ENCODE measurements at regions of chr10 and their contacts with region 1.

Region 1: GRCh38 chr10:11611248-11612020 is at the start of gene USP6NL:
- DNase-seq: peak; percentile 89 to 93
- ATAC-seq: peak; percentile 94 to 98 (median 97)
- H3K4me3 ChIP-seq: peak within 1 kb of the TSS; percentile 72 to 96 (median 84)
- H3K27ac ChIP-seq: peak within 1 kb of the TSS; percentile 73 to 94 (median 92)
- H3K4me1 ChIP-seq: peaks cover 4 to 27% (median 19%) of the 10 kb centered on the region in 9 donors
- H3K27me3 ChIP-seq: no peaks in the 10 kb centered on the region
- CTCF ChIP-seq: no peak
- total RNA-seq, gene USP6NL: 5.7 to 11.1 (median 8.9) TPM

Region 2: GRCh38 chr10:11515596-11516430 is 95.6 kb before region 1 on chr10:
- intact Hi-C with region 1: loop called in 4 of 10 experiments (anchors 5 to 10 kb)
- DNase-seq: peak in 1 of 2 donors; percentile 44
- ATAC-seq: peak; percentile 53 to 92 (median 84)
- H3K4me3 ChIP-seq: no peak overlapping the region
- H3K27ac ChIP-seq: no peak overlapping the region
- H3K4me1 ChIP-seq: peaks cover 0 to 17% (median 8%) of the 10 kb centered on the region in 9 donors
- H3K27me3 ChIP-seq: no peaks in the 10 kb centered on the region
- CTCF ChIP-seq: peak; percentile 68 to 93 (median 90)

Region 3: DNA sequence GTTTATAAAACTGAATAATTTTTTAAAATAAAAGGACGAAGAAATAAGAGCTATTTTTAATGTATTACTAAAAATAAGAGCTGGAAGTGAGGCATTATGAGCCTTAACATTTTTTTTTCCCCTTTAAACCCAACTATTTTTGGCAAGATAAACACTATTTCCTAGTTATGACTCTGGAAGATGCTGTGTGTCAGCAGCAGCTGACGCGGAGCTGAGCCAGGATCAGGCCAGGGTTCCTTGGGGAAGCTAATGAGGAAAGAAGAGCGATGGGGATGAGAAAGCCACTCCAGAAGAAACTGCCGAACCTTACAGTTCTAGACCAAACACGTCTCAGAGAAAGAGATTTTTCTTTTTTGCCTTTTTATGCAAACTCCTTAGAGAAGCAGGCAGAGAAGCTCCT is 85.9 kb before region 1 on chr10:
- intact Hi-C with region 1: loop called in 5 of 10 experiments (anchors 2 to 10 kb)
- DNase-seq: peak; percentile 57 to 66
- ATAC-seq: peak in 7 of 8 donors; percentile 73 to 88 (median 77)
- H3K4me3 ChIP-seq: no peak overlapping the region
- H3K27ac ChIP-seq: peak overlapping the region in 7 of 10 donors; percentile 26 to 62 (median 45)
- H3K4me1 ChIP-seq: peaks cover 0 to 71% (median 37%) of the 10 kb centered on the region in 9 donors
- H3K27me3 ChIP-seq: no peaks in the 10 kb centered on the region
- CTCF ChIP-seq: no peak

Region 4: DNA sequence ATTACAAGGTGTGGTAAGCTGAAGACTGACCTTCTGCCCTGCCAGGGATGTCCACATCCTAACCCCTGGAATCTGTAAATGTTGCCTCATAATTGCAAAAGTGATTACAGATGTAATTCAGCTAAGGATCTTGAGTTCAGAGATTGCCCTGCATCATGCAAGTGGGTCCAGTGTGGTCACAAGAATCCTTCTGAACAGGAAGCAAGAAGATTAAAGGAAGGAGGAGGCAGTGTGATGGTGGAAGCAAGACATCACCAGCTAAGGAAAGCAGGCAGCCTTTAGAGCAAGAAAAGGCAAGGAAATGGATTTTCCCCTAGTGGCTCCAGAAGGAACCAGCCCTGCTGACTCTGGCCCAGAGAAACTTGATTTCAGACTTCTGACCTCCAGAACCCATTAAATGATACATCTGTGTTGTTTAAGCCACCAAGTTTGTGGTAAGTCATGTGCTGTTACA is 78.1 kb before region 1 on chr10:
- intact Hi-C with region 1: loop called in 4 of 10 experiments (anchors 5 to 10 kb)
- DNase-seq: no peak
- ATAC-seq: peak in 5 of 8 donors; percentile 37 to 58 (median 45)
- H3K4me3 ChIP-seq: peak overlapping the region in 1 of 10 donors; percentile 20
- H3K27ac ChIP-seq: peak overlapping the region in 6 of 10 donors; percentile 8 to 59 (median 31)
- H3K4me1 ChIP-seq: peaks cover 0 to 42% (median 9%) of the 10 kb centered on the region in 9 donors
- H3K27me3 ChIP-seq: no peaks in the 10 kb centered on the region
- CTCF ChIP-seq: peak in 4 of 9 donors; percentile 26 to 35 (median 30)

Region 5: GRCh38 chr10:11684717-11685645 is 73.5 kb after region 1 on chr10:
- intact Hi-C with region 1: loop called in 2 of 10 experiments (anchors 5 kb)
- DNase-seq: peak; percentile 65 to 66
- ATAC-seq: peak; percentile 55 to 84 (median 80)
- H3K4me3 ChIP-seq: peak overlapping the region in 9 of 10 donors; percentile 6 to 44 (median 34)
- H3K27ac ChIP-seq: peak overlapping the region in 9 of 10 donors; percentile 22 to 84 (median 68)
- H3K4me1 ChIP-seq: peaks cover 3 to 46% (median 26%) of the 10 kb centered on the region in 9 donors
- H3K27me3 ChIP-seq: peaks cover 0 to 20% (median 0%) of the 10 kb centered on the region in 7 donors
- CTCF ChIP-seq: no peak

Region 6: GRCh38 chr10:11724938-11725776 is 113.7 kb after region 1 on chr10:
- intact Hi-C with region 1: loop called in 1 of 10 experiments (anchors 10 kb)
- DNase-seq: peak in 1 of 2 donors; percentile 27
- ATAC-seq: peak; percentile 62 to 86 (median 79)
- H3K4me3 ChIP-seq: no peak overlapping the region
- H3K27ac ChIP-seq: no peak overlapping the region
- H3K4me1 ChIP-seq: peaks cover 0 to 6% (median 0%) of the 10 kb centered on the region in 9 donors
- H3K27me3 ChIP-seq: no peaks in the 10 kb centered on the region
- CTCF ChIP-seq: peak; percentile 48 to 83 (median 74)

Region 7: DNA sequence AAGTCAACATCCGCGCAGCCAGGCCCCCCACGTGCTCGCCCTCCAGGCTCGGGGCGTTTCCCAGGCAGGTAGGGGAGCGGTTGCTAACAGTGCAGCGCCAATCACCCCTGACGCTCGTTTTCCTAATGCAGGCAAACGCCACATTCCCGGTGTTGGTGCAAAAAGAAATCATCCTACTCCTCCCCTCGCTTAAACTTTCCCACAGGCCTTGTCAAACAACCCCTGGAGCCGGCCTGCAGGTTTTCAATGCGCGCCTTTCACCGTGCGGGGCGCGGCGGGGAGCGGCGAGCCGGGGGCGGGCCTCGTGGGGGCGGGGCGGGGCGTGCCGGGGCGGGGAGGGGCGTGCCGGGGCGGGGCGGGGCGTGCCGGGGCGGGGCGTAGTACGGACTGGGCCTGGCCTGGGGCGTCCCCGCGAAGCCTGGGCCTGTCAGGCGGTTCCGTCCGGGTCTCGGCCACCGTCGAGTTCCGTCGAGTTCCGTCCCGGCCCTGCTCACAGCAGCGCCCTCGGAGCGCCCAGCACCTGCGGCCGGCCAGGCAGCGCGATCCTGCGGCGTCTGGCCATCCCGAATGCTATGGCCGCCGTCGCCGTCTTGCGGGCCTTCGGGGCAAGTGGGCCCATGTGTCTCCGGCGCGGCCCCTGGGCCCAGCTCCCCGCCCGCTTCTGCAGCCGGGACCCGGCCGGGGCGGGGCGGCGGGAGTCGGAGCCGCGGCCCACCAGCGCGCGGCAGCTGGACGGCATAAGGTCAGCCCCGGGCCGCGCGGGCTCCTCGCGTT is 130.8 kb after region 1 on chr10 and contains the start of gene ECHDC3:
- intact Hi-C with region 1: loop called in 1 of 10 experiments (anchors 5 kb)
- DNase-seq: peak; percentile 61 to 75
- ATAC-seq: peak; percentile 66 to 91 (median 83)
- H3K4me3 ChIP-seq: peak within 1 kb of the TSS; percentile 36 to 69 (median 64)
- H3K27ac ChIP-seq: peak within 1 kb of the TSS; percentile 86 to 97 (median 94)
- H3K4me1 ChIP-seq: peaks cover 0 to 38% (median 18%) of the 10 kb centered on the region in 9 donors
- H3K27me3 ChIP-seq: peaks cover 0 to 9% (median 0%) of the 10 kb centered on the region in 7 donors
- CTCF ChIP-seq: no peak
- total RNA-seq, gene ECHDC3: 39.6 to 114 (median 57.1) TPM

Region 8: GRCh38 chr10:11838298-11838852 is 226.9 kb after region 1 on chr10:
- intact Hi-C with region 1: no loop called
- DNase-seq: no peak
- ATAC-seq: peak in 2 of 8 donors; percentile 47 to 64
- H3K4me3 ChIP-seq: no peak overlapping the region
- H3K27ac ChIP-seq: no peak overlapping the region
- H3K4me1 ChIP-seq: peaks cover 0 to 5% (median 0%) of the 10 kb centered on the region in 9 donors
- H3K27me3 ChIP-seq: peaks cover 0 to 3% (median 0%) of the 10 kb centered on the region in 7 donors
- CTCF ChIP-seq: no peak

Measured in heart right ventricle (tissue), 16 donors.